WTC11 (cell line): ENCODE measurements at regions of chr11 and their contacts with region 1.

Region 1: GRCh38 chr11:101860696-101861427 is 53.9 kb upstream of the CEP126 start:
- DNase-seq: peak; percentile 27
- ATAC-seq: peak; percentile 98
- H3K4me3 Mint-ChIP-seq: no peak overlapping the region
- H3K27ac Mint-ChIP-seq: no peak overlapping the region
- H3K4me1 Mint-ChIP-seq: peaks cover 12% of the 10 kb centered on the region; the same call in 1 of the 2 replicates
- H3K27me3 Mint-ChIP-seq: no peaks in the 10 kb centered on the region
- CTCF ChIP-seq: peak; percentile 38; the same call in 1 of the 2 replicates

Region 2: GRCh38 chr11:101428918-101429317 is 431.9 kb before region 1 on chr11:
- CTCF ChIA-PET with region 1: interaction called, 22 read pairs
- POLR2A ChIA-PET with region 1: no interaction called
- DNase-seq: no peak
- ATAC-seq: peak; percentile 89
- H3K4me3 Mint-ChIP-seq: no peak overlapping the region
- H3K27ac Mint-ChIP-seq: no peak overlapping the region
- H3K4me1 Mint-ChIP-seq: peaks cover 29% of the 10 kb centered on the region
- H3K27me3 Mint-ChIP-seq: no peaks in the 10 kb centered on the region
- CTCF ChIP-seq: no peak

Region 3: DNA sequence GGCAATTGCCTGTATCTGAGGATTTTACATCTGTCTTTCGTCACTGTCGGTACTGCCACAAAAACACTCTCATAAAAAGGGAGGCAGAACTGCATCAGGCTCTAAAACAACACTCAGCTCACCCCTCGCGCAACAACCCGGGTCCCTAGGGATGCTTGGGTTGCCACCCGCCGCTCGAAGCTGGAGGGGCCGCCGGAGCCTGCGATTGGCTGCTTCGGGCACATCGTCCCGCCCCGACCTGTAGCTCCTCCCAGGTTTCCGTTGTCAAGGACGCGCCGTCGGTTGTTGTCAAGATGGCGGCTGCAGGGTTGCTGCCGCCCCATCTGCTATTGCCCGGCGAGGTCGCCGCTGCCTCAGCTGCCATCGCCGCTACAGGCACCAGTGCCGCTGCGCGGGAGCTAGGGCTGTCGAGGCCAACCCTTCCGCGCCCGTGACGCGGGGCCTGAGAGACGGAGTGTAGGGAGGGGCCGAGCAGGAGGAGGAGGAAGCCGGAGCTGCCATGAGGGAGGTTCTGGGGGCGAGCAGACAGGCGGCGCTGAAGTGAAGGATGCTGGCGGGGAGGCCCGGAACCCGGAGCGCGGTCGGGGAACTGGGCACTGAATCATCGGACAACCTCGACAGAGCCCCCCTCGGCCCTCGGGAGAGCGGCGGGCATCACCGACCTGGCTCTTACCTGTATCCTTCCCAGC is 54.0 kb after region 1 on chr11 and contains the start of gene CEP126:
- CTCF ChIA-PET with region 1: interaction called, 13 read pairs
- POLR2A ChIA-PET with region 1: no interaction called
- DNase-seq: peak; percentile 97
- ATAC-seq: peak; percentile 93
- H3K4me3 Mint-ChIP-seq: peak within 1 kb of the TSS; percentile 93
- H3K27ac Mint-ChIP-seq: peak within 1 kb of the TSS; percentile 76
- H3K4me1 Mint-ChIP-seq: peaks cover 36% of the 10 kb centered on the region
- H3K27me3 Mint-ChIP-seq: no peaks in the 10 kb centered on the region; the same call in 1 of the 2 replicates
- CTCF ChIP-seq: no peak
- total RNA-seq, gene CEP126: 1.9 to 2.4 TPM (median 2.0 TPM) in 3 replicates

Region 4: GRCh38 chr11:101931692-101932091 is 70.8 kb after region 1 on chr11:
- CTCF ChIA-PET with region 1: no interaction called
- POLR2A ChIA-PET with region 1: no interaction called
- DNase-seq: no peak
- ATAC-seq: no peak
- H3K4me3 Mint-ChIP-seq: no peak overlapping the region
- H3K27ac Mint-ChIP-seq: no peak overlapping the region
- H3K4me1 Mint-ChIP-seq: no peaks in the 10 kb centered on the region
- H3K27me3 Mint-ChIP-seq: no peaks in the 10 kb centered on the region
- CTCF ChIP-seq: no peak

Region 5: GRCh38 chr11:101944923-101945322 is 84.1 kb after region 1 on chr11:
- CTCF ChIA-PET with region 1: no interaction called
- POLR2A ChIA-PET with region 1: no interaction called
- DNase-seq: no peak
- ATAC-seq: no peak
- H3K4me3 Mint-ChIP-seq: no peak overlapping the region
- H3K27ac Mint-ChIP-seq: no peak overlapping the region
- H3K4me1 Mint-ChIP-seq: no peaks in the 10 kb centered on the region
- H3K27me3 Mint-ChIP-seq: no peaks in the 10 kb centered on the region
- CTCF ChIP-seq: no peak